Natural killer cell (primary cell): ENCODE measurements at regions of chr3 and their contacts with region 1.

Region 1: DNA sequence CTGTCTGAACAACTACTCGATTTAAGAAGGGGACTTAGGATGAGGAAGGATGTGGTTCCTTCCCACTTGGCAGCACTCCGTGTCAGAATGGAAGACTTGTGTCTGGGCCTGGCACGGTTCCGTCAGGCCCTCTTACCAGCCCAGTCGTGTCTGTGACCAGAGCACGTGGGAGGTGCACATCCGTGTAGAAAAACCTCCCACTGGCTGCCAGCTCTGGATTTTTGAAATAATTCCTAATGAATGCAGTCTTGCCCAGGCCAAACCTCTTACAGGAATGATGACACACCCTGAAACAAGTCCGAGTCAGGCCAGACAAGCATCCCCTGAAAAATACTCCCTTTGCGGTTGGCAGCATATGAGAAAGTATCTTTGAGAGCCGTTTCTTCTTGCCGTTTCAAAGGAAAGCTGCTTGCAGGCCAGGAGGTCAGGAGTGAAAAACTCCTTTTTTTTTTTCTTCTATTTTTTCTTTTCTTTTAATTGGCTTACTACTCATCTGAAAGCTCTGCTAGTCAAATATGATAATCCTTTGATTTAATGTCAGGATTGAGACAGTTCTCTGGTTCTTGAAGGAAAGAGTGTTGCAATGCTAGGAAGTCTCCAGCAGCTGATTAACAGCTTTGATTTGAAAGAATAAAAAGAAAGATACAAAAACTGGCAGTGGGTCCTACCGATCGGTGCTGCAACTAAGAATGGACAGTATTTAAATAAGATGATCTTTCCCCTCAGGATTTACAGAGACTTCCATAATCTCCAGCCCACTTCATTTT is 19.8 kb downstream of the IL1RAP start:
- DNase-seq: no peak
- ATAC-seq: no peak
- H3K4me3 ChIP-seq: no peak overlapping the region
- H3K4me3 Mint-ChIP-seq: no peak overlapping the region
- H3K27ac ChIP-seq: no peak overlapping the region
- H3K27ac Mint-ChIP-seq: no peak overlapping the region
- H3K4me1 ChIP-seq: no peaks in the 10 kb centered on the region
- H3K4me1 Mint-ChIP-seq: peaks cover 11 to 27% of the 10 kb centered on the region in 2 donors
- H3K27me3 ChIP-seq: no peaks in the 10 kb centered on the region
- H3K27me3 Mint-ChIP-seq: no peaks in the 10 kb centered on the region
- CTCF ChIP-seq: no peak

Region 2: DNA sequence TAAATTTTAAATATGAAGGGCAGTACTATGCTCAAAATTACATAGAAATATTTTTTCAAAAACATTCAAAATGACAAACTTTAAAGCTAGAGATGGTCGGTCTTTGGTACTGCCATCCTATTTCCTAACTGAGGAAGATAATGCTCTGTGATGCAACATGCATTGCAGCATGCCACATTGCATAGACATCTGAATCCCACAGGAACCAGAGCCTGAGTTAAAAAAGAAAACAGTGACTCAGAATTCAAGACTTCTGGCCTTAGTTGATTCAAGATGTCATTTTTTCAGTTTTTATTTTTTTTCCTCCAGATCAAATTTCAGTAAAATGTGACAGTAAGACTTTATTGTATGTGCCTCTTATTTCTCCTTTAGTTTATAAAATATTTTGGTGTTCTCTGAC is 869.4 kb before region 1 on chr3:
- intact Hi-C with region 1: no loop called
- DNase-seq: no peak
- ATAC-seq: no peak
- H3K4me3 ChIP-seq: no peak overlapping the region
- H3K4me3 Mint-ChIP-seq: no peak overlapping the region
- H3K27ac ChIP-seq: no peak overlapping the region
- H3K27ac Mint-ChIP-seq: no peak overlapping the region
- H3K4me1 ChIP-seq: no peaks in the 10 kb centered on the region
- H3K4me1 Mint-ChIP-seq: no peaks in the 10 kb centered on the region
- H3K27me3 ChIP-seq: no peaks in the 10 kb centered on the region
- H3K27me3 Mint-ChIP-seq: no peaks in the 10 kb centered on the region
- CTCF ChIP-seq: no peak

Region 3: DNA sequence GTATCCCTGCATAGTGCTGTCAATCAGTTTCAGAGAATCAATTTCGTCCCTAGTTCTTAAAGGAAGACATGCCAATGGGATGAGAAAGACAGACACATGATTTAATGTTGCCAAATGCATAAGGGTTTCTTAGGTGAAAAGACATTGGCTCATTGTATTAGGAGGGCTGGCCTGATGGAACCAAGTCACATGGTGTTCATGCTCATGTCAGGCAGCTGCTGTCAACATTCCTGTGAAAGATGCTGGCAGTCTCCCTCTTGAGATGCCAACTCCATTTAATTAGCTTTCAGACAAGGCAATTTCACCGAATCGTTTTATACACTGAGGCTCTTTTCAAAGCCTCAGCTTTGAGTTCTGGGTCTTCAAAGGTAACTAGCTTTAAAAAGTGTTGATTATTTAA is 35.9 kb before region 1 on chr3:
- intact Hi-C with region 1: loop called (anchors 1 kb)
- DNase-seq: no peak
- ATAC-seq: no peak
- H3K4me3 ChIP-seq: no peak overlapping the region
- H3K4me3 Mint-ChIP-seq: no peak overlapping the region
- H3K27ac ChIP-seq: no peak overlapping the region
- H3K27ac Mint-ChIP-seq: no peak overlapping the region
- H3K4me1 ChIP-seq: no peaks in the 10 kb centered on the region
- H3K4me1 Mint-ChIP-seq: no peaks in the 10 kb centered on the region
- H3K27me3 ChIP-seq: peaks cover 10% of the 10 kb centered on the region
- H3K27me3 Mint-ChIP-seq: peaks cover 21 to 72% of the 10 kb centered on the region in 2 donors
- CTCF ChIP-seq: no peak

Region 4: GRCh38 chr3:190696777-190697501 is 163.2 kb after region 1 on chr3:
- intact Hi-C with region 1: no loop called
- DNase-seq: peak in 1 of 2 donors; percentile 13
- ATAC-seq: no peak
- H3K4me3 ChIP-seq: no peak overlapping the region
- H3K4me3 Mint-ChIP-seq: no peak overlapping the region
- H3K27ac ChIP-seq: no peak overlapping the region
- H3K27ac Mint-ChIP-seq: no peak overlapping the region
- H3K4me1 ChIP-seq: no peaks in the 10 kb centered on the region
- H3K4me1 Mint-ChIP-seq: no peaks in the 10 kb centered on the region
- H3K27me3 ChIP-seq: no peaks in the 10 kb centered on the region
- H3K27me3 Mint-ChIP-seq: no peaks in the 10 kb centered on the region
- CTCF ChIP-seq: peak; percentile 20